Endothelial cell of umbilical vein (primary cell): ENCODE measurements at regions of chr11 and their contacts with region 1.

Region 1: GRCh38 chr11:35391922-35392813 is 27.2 kb downstream of the SLC1A2 start:
- DNase-seq: peak; percentile 62
- H3K4me3 ChIP-seq: no peak overlapping the region
- H3K27ac ChIP-seq: no peak overlapping the region
- H3K4me1 ChIP-seq: no peaks in the 10 kb centered on the region
- H3K27me3 ChIP-seq: peaks cover 10 to 14% of the 10 kb centered on the region in 2 experiments
- CTCF ChIP-seq: peak; percentile 80 to 81
- POLR2A ChIP-seq: no peak

Region 2: DNA sequence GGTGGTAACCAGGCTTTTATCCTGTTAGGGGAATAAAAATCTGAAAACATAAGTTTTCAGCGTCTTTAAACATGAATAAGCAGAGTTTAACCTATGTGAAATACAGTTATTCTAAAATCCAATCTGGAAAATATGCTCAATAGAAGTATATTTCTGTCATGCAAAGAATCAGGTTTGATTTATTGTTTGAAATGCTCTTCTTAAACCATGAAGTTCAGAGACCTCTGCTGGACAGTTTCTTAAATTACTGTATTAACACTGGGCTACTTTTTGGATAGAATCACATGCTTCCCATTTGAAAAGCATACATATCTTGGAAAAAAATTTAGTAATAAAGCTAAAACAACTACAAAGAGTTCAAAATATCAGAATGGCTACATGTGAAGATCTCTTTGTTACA is 501.4 kb before region 1 on chr11:
- CTCF ChIA-PET with region 1: no interaction called
- POLR2A ChIA-PET with region 1: no interaction called
- dilution Hi-C with region 1: no loop called
- intact Hi-C with region 1: loop called (anchors 1 kb)
- DNase-seq: peak; percentile 58
- H3K4me3 ChIP-seq: no peak overlapping the region
- H3K27ac ChIP-seq: no peak overlapping the region
- H3K4me1 ChIP-seq: no peaks in the 10 kb centered on the region
- H3K27me3 ChIP-seq: no peaks in the 10 kb centered on the region
- CTCF ChIP-seq: peak in 1 of 2 donors; percentile 12
- POLR2A ChIP-seq: no peak

Region 3: GRCh38 chr11:34997952-34998528 is 394.1 kb before region 1 on chr11:
- CTCF ChIA-PET with region 1: interaction called, 5 read pairs
- POLR2A ChIA-PET with region 1: no interaction called
- dilution Hi-C with region 1: no loop called
- intact Hi-C with region 1: loop called (anchors 1 kb)
- DNase-seq: peak; percentile 26
- H3K4me3 ChIP-seq: no peak overlapping the region
- H3K27ac ChIP-seq: no peak overlapping the region
- H3K4me1 ChIP-seq: peaks cover 4% of the 10 kb centered on the region
- H3K27me3 ChIP-seq: no peaks in the 10 kb centered on the region
- CTCF ChIP-seq: no peak
- POLR2A ChIP-seq: no peak

Region 4: GRCh38 chr11:35237860-35238715 is 154.1 kb before region 1 on chr11:
- CTCF ChIA-PET with region 1: interaction called, 5 read pairs
- POLR2A ChIA-PET with region 1: no interaction called
- dilution Hi-C with region 1: no loop called
- intact Hi-C with region 1: loop called (anchors 2 kb)
- DNase-seq: peak; percentile 70
- H3K4me3 ChIP-seq: no peak overlapping the region
- H3K27ac ChIP-seq: no peak overlapping the region
- H3K4me1 ChIP-seq: no peaks in the 10 kb centered on the region
- H3K27me3 ChIP-seq: peaks cover 5 to 21% of the 10 kb centered on the region in 2 experiments
- CTCF ChIP-seq: peak; percentile 78 to 81
- POLR2A ChIP-seq: no peak

Region 5: DNA sequence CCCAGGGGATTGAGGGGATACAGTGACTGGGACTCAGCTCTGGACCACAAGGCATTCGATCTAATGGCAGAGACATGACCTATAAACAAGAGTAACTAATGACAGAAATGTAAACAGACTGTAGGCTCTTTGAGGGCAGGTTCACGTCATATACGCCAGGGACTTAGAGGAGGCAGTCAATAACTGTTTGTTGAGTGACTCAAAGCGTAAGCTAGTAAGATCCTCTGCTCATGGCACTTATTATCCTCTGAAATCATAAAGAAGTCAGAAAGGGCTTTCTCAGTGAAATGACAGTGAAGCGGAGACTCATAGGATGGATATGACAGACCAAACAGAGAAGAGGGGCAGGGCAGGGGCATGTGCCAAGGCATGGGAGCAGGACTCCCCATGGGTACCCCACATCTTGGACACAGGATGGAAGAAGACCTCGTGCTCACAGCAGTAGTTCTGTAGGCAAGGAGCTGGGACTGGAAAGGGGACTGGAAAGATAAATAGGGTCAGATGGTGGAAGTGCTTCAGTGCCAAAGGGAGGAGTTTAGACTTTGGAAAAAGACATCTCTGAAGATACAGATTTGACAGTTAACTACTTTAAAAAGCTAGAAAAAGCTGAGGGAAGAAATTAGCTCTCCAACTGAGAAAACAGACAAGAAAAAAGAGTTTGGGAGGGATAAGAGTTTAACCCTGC is 45.6 kb before region 1 on chr11:
- CTCF ChIA-PET with region 1: no interaction called
- POLR2A ChIA-PET with region 1: no interaction called
- dilution Hi-C with region 1: no loop called
- intact Hi-C with region 1: no loop called
- DNase-seq: no peak
- H3K4me3 ChIP-seq: no peak overlapping the region
- H3K27ac ChIP-seq: no peak overlapping the region
- H3K4me1 ChIP-seq: no peaks in the 10 kb centered on the region
- H3K27me3 ChIP-seq: peaks cover 0 to 4% of the 10 kb centered on the region in 2 experiments
- CTCF ChIP-seq: no peak
- POLR2A ChIP-seq: no peak

Region 6: DNA sequence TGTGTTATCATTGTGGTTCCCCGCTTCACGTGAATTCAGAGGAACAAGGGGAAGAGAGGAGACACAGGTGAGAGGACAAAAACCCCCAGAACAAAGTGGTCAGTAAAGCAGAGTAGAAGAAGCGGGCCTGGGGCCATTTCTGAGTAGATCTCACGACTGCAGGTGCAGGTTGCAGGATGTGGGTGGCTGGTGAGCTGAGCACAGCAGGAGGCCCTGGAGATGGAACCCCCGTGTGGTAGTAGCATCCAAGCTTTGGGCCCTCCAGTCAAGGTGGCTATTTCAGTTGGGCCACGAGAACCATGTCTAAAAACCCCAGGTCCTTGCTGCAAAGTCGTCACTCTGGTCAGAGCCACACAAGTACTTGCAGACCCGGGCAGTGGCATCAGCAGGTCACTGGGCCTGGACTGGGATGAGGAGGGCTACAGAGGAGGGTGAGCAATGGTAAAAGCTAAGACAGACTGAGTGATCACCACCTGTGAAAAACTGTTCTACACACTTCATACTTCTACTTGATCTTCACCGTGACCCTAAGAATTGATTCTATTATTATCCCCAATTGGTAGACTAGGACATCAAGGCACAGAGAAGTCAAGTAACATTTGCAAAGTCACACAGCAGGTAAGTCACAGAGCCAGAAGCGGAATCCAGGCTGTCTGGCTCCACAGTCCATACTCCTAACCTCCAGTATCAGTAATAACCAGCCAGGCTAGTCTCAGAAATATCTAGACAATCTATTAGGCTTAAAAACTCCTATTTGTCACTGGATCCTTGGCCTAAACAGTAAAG is 16.6 kb before region 1 on chr11:
- CTCF ChIA-PET with region 1: no interaction called
- POLR2A ChIA-PET with region 1: no interaction called
- dilution Hi-C with region 1: no loop called
- intact Hi-C with region 1: no loop called
- DNase-seq: no peak
- H3K4me3 ChIP-seq: no peak overlapping the region
- H3K27ac ChIP-seq: no peak overlapping the region
- H3K4me1 ChIP-seq: no peaks in the 10 kb centered on the region
- H3K27me3 ChIP-seq: peaks cover 0 to 15% of the 10 kb centered on the region in 2 experiments
- CTCF ChIP-seq: no peak
- POLR2A ChIP-seq: no peak

Region 7: DNA sequence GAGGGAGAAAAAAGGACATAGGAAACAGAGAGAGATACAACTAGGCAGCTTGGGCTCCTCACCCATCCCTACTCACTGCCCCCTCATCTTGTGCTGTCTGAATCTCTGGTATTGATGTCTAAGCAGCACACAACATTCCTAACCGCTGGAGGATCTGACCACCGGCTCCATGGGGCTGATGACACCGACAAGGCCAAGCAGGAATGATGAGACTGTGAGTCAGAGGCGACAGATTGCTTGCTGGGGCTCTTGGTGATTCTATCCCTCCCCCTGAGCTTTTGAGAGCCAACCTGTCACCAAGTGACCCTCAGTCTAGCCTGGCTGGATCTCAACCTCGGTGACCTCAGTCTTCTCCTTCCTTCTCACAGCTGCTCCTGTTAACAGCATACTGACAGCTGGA is 119.5 kb after region 1 on chr11:
- CTCF ChIA-PET with region 1: no interaction called
- POLR2A ChIA-PET with region 1: no interaction called
- dilution Hi-C with region 1: no loop called
- intact Hi-C with region 1: no loop called
- DNase-seq: no peak
- H3K4me3 ChIP-seq: no peak overlapping the region
- H3K27ac ChIP-seq: no peak overlapping the region
- H3K4me1 ChIP-seq: no peaks in the 10 kb centered on the region
- H3K27me3 ChIP-seq: peaks cover 0 to 3% of the 10 kb centered on the region in 2 experiments
- CTCF ChIP-seq: no peak
- POLR2A ChIP-seq: no peak

Region 8: GRCh38 chr11:35794850-35795249 is 402.7 kb after region 1 on chr11:
- CTCF ChIA-PET with region 1: no interaction called
- POLR2A ChIA-PET with region 1: no interaction called
- dilution Hi-C with region 1: no loop called
- intact Hi-C with region 1: no loop called
- DNase-seq: no peak
- H3K4me3 ChIP-seq: no peak overlapping the region
- H3K27ac ChIP-seq: no peak overlapping the region
- H3K4me1 ChIP-seq: peaks cover 45% of the 10 kb centered on the region
- H3K27me3 ChIP-seq: no peaks in the 10 kb centered on the region
- CTCF ChIP-seq: no peak
- POLR2A ChIP-seq: no peak